ENCODE measurements at regions of chr19 and their contacts with region 1.

Region 1: GRCh38 chr19:54024660-54025059 is 33.2 kb downstream of the CACNG6 start:
- DNase-seq: no peak
- H3K4me3 ChIP-seq: no peak overlapping the region
- H3K27ac ChIP-seq: no peak overlapping the region
- H3K4me1 ChIP-seq: peaks cover 10% of the 10 kb centered on the region
- H3K27me3 ChIP-seq: no peaks in the 10 kb centered on the region
- CTCF ChIP-seq: no peak

Region 2: GRCh38 chr19:53844849-53845246 is 179.8 kb before region 1 on chr19:
- CTCF ChIA-PET with region 1: interaction called, 5 read pairs
- POLR2A ChIA-PET with region 1: no interaction called
- intact Hi-C with region 1: loop called (anchors 1 kb)
- DNase-seq: no peak
- H3K4me3 ChIP-seq: no peak overlapping the region
- H3K27ac ChIP-seq: no peak overlapping the region
- H3K4me1 ChIP-seq: peaks cover 7% of the 10 kb centered on the region
- H3K27me3 ChIP-seq: no peaks in the 10 kb centered on the region
- CTCF ChIP-seq: no peak

Region 3: DNA sequence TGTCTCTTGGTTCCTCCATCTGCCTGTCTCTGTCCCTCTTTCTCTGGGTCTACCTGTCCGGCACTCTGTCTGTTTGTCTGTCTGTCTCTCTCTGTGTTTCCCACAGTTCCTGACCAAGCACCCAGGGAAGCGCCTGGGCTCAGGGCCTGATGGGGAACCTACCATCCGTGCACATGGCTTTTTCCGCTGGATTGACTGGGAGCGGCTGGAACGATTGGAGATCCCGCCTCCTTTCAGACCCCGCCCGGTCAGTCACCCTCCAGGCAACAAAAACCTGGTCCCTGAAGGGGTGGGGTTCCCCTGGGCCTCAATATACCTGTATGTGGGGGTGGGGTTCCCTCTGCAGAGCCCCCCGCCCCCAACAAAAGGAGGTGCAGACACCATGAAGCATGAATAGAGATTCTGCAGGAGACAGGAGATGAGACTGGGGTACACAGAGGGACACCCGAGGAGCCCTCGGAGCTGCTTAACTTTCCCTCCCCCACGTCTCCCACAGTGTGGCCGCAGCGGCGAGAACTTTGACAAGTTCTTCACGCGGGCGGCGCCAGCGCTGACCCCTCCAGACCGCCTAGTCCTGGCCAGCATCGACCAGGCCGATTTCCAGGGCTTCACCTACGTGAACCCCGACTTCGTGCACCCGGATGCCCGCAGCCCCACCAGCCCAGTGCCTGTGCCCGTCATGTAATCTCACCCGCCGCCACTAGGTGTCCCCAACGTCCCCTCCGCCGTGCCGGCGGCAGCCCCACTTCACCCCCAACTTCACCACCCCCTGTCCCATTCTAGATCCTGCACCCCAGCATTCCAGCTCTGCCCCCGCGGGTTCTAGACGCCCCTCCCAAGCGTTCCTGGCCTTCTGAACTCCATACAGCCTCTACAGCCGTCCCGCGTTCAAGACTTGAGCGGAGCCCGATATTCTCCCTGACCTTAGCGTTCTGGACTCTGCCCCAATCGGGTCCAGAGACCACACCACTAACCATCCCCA is 118.2 kb before region 1 on chr19:
- CTCF ChIA-PET with region 1: interaction called, 6 read pairs
- POLR2A ChIA-PET with region 1: no interaction called
- intact Hi-C with region 1: loop called (anchors 1 kb)
- DNase-seq: peak; percentile 55
- H3K4me3 ChIP-seq: peak overlapping the region; percentile 30
- H3K27ac ChIP-seq: no peak overlapping the region
- H3K4me1 ChIP-seq: peaks cover 8% of the 10 kb centered on the region
- H3K27me3 ChIP-seq: peaks cover 45% of the 10 kb centered on the region
- CTCF ChIP-seq: peak; percentile 92

Region 4: GRCh38 chr19:54266133-54266532 is 241.5 kb after region 1 on chr19:
- CTCF ChIA-PET with region 1: no interaction called
- POLR2A ChIA-PET with region 1: no interaction called
- intact Hi-C with region 1: no loop called
- DNase-seq: peak; percentile 76
- H3K4me3 ChIP-seq: no peak overlapping the region
- H3K27ac ChIP-seq: no peak overlapping the region
- H3K4me1 ChIP-seq: no peaks in the 10 kb centered on the region
- H3K27me3 ChIP-seq: peaks cover 15% of the 10 kb centered on the region
- CTCF ChIP-seq: peak; percentile 77

Measured in A673 (cell line).